Transverse colon (tissue), 4 donors: ENCODE measurements at regions of chr9 and their contacts with region 1.

Region 1: DNA sequence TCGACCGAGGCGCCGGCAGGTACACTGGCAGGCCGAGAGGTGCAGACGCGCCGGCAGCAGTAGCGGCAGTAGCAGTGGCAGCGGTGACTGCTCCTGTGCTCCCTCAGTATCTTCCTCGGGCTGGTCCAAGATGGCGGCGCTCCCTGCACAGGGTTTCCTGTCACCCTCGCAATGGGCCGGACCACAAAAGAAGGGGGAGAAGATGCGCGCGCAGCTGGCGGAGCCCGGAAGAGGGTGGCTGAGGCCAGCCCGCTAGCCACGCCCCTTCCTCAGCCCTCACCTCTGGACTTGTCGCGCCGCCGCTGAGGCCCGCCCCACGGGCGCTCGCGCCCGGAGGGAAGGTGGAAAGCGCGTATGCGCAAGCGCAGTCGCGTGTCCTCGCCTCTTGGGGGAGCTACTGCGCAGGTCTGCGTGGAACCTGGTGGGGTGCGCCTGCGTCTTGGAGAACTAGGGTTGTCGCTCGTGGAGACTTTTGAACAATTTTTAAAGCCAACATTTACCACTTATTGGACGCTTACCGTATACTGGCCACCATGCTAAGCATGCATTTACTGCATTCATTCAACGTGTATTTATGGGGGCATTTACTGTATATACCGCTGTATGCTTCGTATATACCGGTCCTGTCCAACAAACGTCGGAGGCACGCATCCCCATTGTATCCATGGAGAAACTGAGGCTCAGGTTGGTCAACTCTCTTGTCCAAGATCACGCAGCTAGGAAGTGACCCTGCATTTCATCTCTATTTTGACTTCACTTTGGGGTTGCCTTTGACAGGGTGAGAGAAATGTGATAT is at the start of gene RAB14:
- DNase-seq: peak; percentile 100
- H3K4me3 ChIP-seq: peak within 1 kb of the TSS; percentile 69 to 99 (median 82)
- H3K27ac ChIP-seq: peak within 1 kb of the TSS; percentile 95 to 99 (median 96)
- H3K4me1 ChIP-seq: peaks cover 30 to 41% (median 35%) of the 10 kb centered on the region in 4 donors
- H3K27me3 ChIP-seq: no peaks in the 10 kb centered on the region
- CTCF ChIP-seq: peak; percentile 49 to 76 (median 58)
- EP300 ChIP-seq: no peak
- POLR2A ChIP-seq: peak; percentile 73
- total RNA-seq, gene RAB14: 20.7 to 50.3 (median 37.9) TPM

Region 2: GRCh38 chr9:121261107-121261460 is 59.1 kb after region 1 on chr9:
- in situ Hi-C with region 1: no loop called
- intact Hi-C with region 1: no loop called
- DNase-seq: no peak
- H3K4me3 ChIP-seq: no peak overlapping the region
- H3K27ac ChIP-seq: peak overlapping the region; percentile 61 to 76 (median 68)
- H3K4me1 ChIP-seq: peaks cover 8 to 14% (median 12%) of the 10 kb centered on the region in 4 donors
- H3K27me3 ChIP-seq: no peaks in the 10 kb centered on the region
- CTCF ChIP-seq: no peak
- EP300 ChIP-seq: no peak
- POLR2A ChIP-seq: no peak

Region 3: GRCh38 chr9:121299467-121300234 is 97.7 kb after region 1 on chr9:
- in situ Hi-C with region 1: loop called in 2 of 4 experiments (anchors 25 kb)
- intact Hi-C with region 1: no loop called
- DNase-seq: peak; percentile 70
- H3K4me3 ChIP-seq: peak overlapping the region; percentile 16 to 60 (median 54)
- H3K27ac ChIP-seq: peak overlapping the region; percentile 79 to 95 (median 88)
- H3K4me1 ChIP-seq: peaks cover 59 to 89% (median 72%) of the 10 kb centered on the region in 4 donors
- H3K27me3 ChIP-seq: no peaks in the 10 kb centered on the region
- CTCF ChIP-seq: no peak
- EP300 ChIP-seq: no peak
- POLR2A ChIP-seq: peak; percentile 41

Region 4: DNA sequence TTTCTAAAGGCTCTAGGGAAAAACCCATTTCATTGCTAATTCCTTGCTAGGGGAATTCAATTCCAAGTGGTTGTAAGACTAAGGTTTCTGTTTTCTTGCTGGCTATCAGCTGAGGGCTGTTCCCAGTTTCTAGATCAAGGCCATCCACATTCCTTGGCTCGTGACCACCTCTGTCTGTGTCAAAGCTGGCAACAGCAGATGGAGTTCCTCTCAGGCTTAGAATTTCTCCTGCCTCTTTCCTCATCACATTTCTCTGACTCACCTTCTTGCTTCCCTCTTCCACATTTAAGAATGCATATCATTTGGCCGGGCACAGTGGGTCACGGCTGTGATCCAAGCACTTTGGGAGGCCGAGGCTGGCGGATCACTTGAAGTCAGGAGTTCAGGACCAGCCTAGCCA is 468.5 kb after region 1 on chr9:
- in situ Hi-C with region 1: no loop called
- intact Hi-C with region 1: no loop called
- DNase-seq: no peak
- H3K4me3 ChIP-seq: no peak overlapping the region
- H3K27ac ChIP-seq: no peak overlapping the region
- H3K4me1 ChIP-seq: peaks cover 3 to 16% (median 8%) of the 10 kb centered on the region in 4 donors
- H3K27me3 ChIP-seq: no peaks in the 10 kb centered on the region
- CTCF ChIP-seq: no peak
- EP300 ChIP-seq: no peak
- POLR2A ChIP-seq: no peak